Activated B cell treated with CpG ODN at 0.5 μM for 24 hours (primary cell): ENCODE measurements at regions of chr9 and their contacts with region 1.

Region 1: DNA sequence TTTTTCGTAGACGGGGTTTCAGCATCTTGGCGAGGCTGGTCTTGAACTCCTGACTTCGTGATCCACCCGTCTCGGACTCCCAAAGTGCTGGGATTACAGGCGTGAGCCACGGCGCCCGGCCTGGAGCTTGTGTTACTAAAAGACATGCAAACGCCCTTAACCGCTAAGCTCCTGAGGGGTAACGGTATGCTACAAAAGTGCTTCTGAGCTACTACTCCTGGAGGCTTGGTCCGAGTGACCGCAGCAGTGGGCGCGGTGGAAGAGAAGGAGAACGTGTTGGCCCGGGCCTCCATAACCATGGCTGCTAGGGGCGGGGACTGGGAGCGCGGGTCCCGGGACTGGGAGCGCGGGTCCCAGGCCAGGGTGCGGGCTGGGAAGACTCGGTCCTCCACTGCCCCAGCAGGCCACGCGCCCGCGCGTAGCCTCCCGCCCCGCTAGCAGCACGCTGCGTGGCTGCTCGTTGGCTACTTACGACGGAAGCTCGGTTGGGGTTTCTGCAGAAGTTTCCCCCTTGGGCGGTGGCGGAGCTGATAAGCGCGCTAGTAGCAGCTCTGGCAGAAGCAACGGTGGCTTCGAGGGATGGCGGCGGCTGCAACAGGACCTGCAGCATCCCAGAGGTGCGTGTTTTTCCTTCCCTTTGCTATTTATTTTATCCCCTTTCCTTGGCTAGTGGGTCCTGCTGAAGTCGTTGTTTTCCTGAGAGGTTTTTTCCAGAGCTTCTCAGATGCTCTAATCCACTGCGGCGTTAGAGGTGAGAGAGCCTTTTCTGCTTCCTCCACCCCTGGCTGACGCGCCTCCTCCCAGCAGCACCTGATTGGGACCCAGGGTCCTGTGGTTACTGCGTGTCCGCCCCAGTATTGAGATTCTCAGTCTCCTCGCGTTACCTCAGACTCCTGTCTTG is 69.3 kb upstream of the CCDC180 start:
- DNase-seq: peak; percentile 62
- ATAC-seq: peak; percentile 92
- H3K4me3 Mint-ChIP-seq: peak overlapping the region; percentile 95
- H3K27ac Mint-ChIP-seq: peak overlapping the region; percentile 90
- H3K4me1 Mint-ChIP-seq: peaks cover 18% of the 10 kb centered on the region
- H3K27me3 Mint-ChIP-seq: peaks cover 2% of the 10 kb centered on the region
- CTCF ChIP-seq: no peak

Region 2: GRCh38 chr9:95317119-95317892 is 1920.9 kb before region 1 on chr9 and contains the start of gene FANCC:
- CTCF ChIA-PET with region 1: no interaction called
- POLR2A ChIA-PET with region 1: no interaction called
- intact Hi-C with region 1: loop called (anchors 10 kb)
- DNase-seq: peak; percentile 89
- ATAC-seq: peak; percentile 84
- H3K4me3 Mint-ChIP-seq: peak within 1 kb of the TSS; percentile 92
- H3K27ac Mint-ChIP-seq: peak within 1 kb of the TSS; percentile 91
- H3K4me1 Mint-ChIP-seq: peaks cover 15% of the 10 kb centered on the region
- H3K27me3 Mint-ChIP-seq: peaks cover 10% of the 10 kb centered on the region
- CTCF ChIP-seq: no peak
- total RNA-seq, gene FANCC: 10.4 and 11.4 TPM in 2 replicates

Region 3: DNA sequence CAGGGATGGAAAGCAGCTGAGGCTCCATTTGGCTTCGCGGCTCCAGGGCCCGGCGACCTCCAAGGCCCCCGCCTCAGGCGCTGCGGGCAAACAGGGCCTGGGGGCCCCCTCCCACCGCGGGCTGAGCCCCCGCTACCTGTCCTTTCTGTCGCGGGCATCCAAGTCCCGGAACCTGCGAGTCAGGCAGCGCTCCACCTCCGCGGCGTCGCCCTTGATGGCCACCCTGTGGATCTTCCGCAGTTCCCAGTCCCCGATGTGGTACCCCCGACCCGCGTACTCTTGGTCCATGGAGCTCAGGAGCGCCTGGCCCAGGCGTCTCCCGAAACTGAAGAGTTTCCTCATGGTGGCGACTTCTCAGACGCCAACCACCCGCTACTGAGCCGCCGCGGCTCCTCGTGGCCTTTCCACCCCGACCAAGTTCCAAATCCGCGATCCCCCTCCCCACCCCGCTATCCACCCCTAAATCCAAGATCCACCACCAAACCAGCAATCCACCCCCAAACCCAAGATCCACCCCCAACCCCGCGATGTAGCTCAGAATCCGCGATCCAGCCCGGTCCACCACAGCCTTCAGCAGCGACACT is 17.2 kb before region 1 on chr9:
- CTCF ChIA-PET with region 1: interaction called, 9 read pairs
- POLR2A ChIA-PET with region 1: interaction called, 8 read pairs
- intact Hi-C with region 1: loop called (anchors 1 kb)
- DNase-seq: no peak
- ATAC-seq: no peak
- H3K4me3 Mint-ChIP-seq: peak overlapping the region; percentile 78
- H3K27ac Mint-ChIP-seq: no peak overlapping the region
- H3K4me1 Mint-ChIP-seq: peaks cover 5% of the 10 kb centered on the region
- H3K27me3 Mint-ChIP-seq: peaks cover 42% of the 10 kb centered on the region
- CTCF ChIP-seq: no peak

Region 4: GRCh38 chr9:97293207-97293721 is 55.1 kb after region 1 on chr9:
- CTCF ChIA-PET with region 1: no interaction called
- POLR2A ChIA-PET with region 1: no interaction called
- intact Hi-C with region 1: no loop called
- DNase-seq: no peak
- ATAC-seq: no peak
- H3K4me3 Mint-ChIP-seq: no peak overlapping the region
- H3K27ac Mint-ChIP-seq: no peak overlapping the region
- H3K4me1 Mint-ChIP-seq: no peaks in the 10 kb centered on the region
- H3K27me3 Mint-ChIP-seq: no peaks in the 10 kb centered on the region
- CTCF ChIP-seq: no peak

Region 5: GRCh38 chr9:97386733-97387503 is 148.7 kb after region 1 on chr9:
- CTCF ChIA-PET with region 1: no interaction called
- POLR2A ChIA-PET with region 1: no interaction called
- intact Hi-C with region 1: loop called (anchors 5 kb)
- DNase-seq: peak; percentile 76
- ATAC-seq: peak; percentile 53
- H3K4me3 Mint-ChIP-seq: no peak overlapping the region
- H3K27ac Mint-ChIP-seq: no peak overlapping the region
- H3K4me1 Mint-ChIP-seq: peaks cover 23% of the 10 kb centered on the region
- H3K27me3 Mint-ChIP-seq: peaks cover 4% of the 10 kb centered on the region
- CTCF ChIP-seq: peak; percentile 52